ENCODE measurements at regions of chr9 and their contacts with region 1.

Region 1: DNA sequence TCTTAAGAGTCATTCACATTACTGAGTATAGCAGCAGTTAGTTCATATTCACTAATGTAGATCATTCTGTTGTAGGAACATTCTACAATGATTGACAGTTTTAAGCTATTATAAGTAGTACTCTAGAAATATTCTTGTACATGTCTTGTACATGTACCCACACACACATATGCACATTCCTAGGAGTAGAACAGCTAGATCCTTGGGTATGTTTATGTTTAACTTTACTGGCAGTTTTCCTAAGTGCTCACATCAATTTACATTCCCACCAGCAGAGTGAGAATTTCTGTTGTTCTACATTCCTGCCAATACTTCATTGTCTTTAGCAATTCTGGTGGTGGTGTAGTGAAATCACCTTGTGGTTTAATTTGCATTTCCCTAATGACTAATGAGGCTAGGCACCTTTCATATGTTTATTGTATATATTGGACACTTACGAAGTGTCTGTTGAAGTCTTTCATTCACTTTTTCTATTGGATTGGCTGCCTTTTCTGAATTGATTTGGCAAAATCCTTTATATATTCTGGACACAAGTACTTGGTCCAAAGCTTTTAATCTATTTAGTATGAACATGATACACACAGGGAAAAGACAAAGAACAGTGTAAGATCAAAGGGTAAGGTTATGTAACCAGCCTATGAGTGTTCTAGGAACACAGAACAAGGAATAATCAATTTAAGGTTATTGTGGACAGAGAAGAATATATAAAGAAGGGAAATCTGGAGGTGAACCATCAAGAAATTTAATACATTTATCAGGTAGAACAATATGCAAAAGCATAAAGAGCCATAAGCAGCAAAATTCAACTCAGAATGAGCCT is 95.6 kb downstream of the MLLT3 start:
- DNase-seq: no peak
- ATAC-seq: peak; percentile 56
- H3K4me3 ChIP-seq: no peak overlapping the region
- H3K4me3 Mint-ChIP-seq: no peak overlapping the region
- H3K27ac ChIP-seq: no peak overlapping the region
- H3K27ac Mint-ChIP-seq: peak overlapping the region; percentile 28
- H3K4me1 ChIP-seq: peaks cover 12% of the 10 kb centered on the region
- H3K4me1 Mint-ChIP-seq: peaks cover 89% of the 10 kb centered on the region
- H3K27me3 ChIP-seq: no peaks in the 10 kb centered on the region
- H3K27me3 Mint-ChIP-seq: no peaks in the 10 kb centered on the region
- CTCF ChIP-seq: no peak

Region 2: GRCh38 chr9:20462410-20462809 is 64.3 kb before region 1 on chr9:
- CTCF ChIA-PET with region 1: no interaction called
- POLR2A ChIA-PET with region 1: no interaction called
- intact Hi-C with region 1: no loop called
- DNase-seq: no peak
- ATAC-seq: no peak
- H3K4me3 ChIP-seq: no peak overlapping the region
- H3K4me3 Mint-ChIP-seq: no peak overlapping the region
- H3K27ac ChIP-seq: no peak overlapping the region
- H3K27ac Mint-ChIP-seq: peak overlapping the region; percentile 18
- H3K4me1 ChIP-seq: peaks cover 12% of the 10 kb centered on the region
- H3K4me1 Mint-ChIP-seq: peaks cover 79% of the 10 kb centered on the region
- H3K27me3 ChIP-seq: no peaks in the 10 kb centered on the region
- H3K27me3 Mint-ChIP-seq: no peaks in the 10 kb centered on the region
- CTCF ChIP-seq: no peak

Region 3: GRCh38 chr9:20558566-20559016 is 31.9 kb after region 1 on chr9:
- CTCF ChIA-PET with region 1: no interaction called
- POLR2A ChIA-PET with region 1: no interaction called
- intact Hi-C with region 1: loop called in 1 of 2 experiments (anchors 5 kb)
- DNase-seq: peak in 1 of 14 experiments; percentile 28
- ATAC-seq: peak; percentile 24
- H3K4me3 ChIP-seq: no peak overlapping the region
- H3K4me3 Mint-ChIP-seq: no peak overlapping the region
- H3K27ac ChIP-seq: no peak overlapping the region
- H3K27ac Mint-ChIP-seq: peak overlapping the region; percentile 16
- H3K4me1 ChIP-seq: peaks cover 20% of the 10 kb centered on the region
- H3K4me1 Mint-ChIP-seq: peaks cover 91% of the 10 kb centered on the region
- H3K27me3 ChIP-seq: no peaks in the 10 kb centered on the region
- H3K27me3 Mint-ChIP-seq: no peaks in the 10 kb centered on the region
- CTCF ChIP-seq: no peak